Aorta (tissue), 5 donors: ENCODE measurements at regions of chrX and their contacts with region 1.

Region 1: GRCh38 chrX:49043220-49043986 is at the start of gene TFE3:
- DNase-seq: peak; percentile 98 to 99
- ATAC-seq: peak; percentile 93
- H3K4me3 ChIP-seq: peak within 1 kb of the TSS; percentile 32 to 77
- H3K27ac ChIP-seq: peak within 1 kb of the TSS; percentile 50 to 93
- H3K4me1 ChIP-seq: no peaks in the 10 kb centered on the region
- H3K27me3 ChIP-seq: no peaks in the 10 kb centered on the region
- total RNA-seq, gene TFE3: 67.7 to 70.6 TPM

Region 2: DNA sequence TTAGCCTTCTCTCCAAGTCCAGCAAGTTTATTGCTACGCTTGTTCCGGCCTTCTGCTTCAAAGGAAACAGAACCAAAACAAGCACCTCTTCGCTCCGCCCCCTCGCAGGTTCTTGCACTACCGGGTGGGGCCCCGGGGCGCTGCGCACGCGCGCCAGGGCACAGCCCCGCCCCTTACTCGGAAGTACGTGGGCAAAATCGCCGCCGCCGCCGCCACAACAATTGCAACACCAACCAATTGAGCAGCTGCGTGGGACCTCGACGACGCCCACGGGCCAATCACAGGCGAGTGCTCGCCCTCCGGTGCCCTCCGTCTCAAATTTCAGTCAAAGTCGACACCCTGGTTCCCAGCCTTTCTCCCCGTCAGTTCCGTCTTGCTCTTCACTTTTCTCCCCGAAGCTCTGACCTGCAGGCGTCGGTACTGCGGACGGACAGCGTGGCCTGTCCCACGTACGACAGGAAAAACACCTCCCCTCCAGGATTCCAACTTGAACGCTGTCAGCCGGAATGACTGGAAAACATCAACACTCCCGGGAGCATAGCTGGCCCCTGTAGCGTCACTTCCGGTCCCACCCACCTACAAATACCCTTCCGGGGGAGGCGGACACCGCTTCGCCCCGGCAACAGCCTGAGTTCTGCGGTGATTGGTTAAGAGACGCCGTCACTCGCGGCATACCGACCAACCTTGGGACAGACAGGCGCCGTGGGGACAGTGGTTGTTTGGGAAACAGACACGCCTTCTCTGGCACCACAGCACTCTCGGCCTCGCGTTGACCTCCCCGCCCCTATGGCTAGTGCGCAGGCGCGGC is 85.4 kb before region 1 on chrX:
- intact Hi-C with region 1: loop called in 1 of 2 experiments (anchors 5 kb)
- DNase-seq: peak; percentile 97 to 98
- ATAC-seq: peak; percentile 95
- H3K4me3 ChIP-seq: peak overlapping the region; percentile 61 to 67
- H3K27ac ChIP-seq: peak overlapping the region in 1 of 2 donors; percentile 97
- H3K4me1 ChIP-seq: peaks cover 0 to 2% of the 10 kb centered on the region in 2 donors
- H3K27me3 ChIP-seq: no peaks in the 10 kb centered on the region

Region 3: DNA sequence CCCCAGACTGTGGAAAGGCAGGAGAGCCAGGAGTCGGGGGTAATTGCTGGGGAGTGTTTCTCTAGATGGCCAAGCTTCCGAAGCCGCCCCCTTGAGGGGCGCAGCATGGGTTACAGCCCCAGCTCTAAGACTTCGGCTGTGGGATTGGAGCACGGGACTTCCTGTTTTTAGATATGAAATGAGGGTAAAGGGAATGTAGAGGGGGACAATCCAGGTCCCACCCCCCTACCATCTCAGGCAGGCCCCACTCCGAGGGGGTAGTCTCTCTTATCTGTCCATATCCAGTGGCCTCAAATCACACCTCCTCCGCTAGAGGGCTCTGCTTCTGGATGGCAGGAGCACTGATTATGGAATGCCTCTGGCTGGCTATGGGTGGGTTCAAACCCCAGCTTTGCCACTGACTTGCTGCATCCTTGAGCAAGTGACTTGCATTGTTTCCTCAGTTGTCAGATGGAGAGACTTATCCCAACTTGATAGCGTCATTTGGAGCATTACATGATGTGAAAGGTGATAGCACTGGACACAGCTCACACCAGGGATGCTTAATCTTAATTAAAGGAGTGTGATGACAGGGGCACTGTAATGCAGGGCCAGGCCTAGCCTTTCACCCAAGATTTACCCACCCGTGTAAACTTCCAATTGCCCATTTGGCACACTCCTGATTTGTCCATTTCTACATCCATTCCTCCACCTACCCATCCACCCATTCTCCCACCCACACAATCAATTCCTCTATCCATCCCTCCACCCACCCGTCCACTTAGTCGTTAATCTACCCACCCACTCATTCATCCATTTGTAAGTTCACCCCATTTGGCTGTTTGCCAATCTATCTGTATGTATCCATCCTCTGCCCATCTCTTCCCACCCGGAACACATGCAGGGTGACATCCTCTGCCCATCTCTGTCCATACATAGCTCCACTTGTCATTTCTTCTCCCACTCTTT is 70.9 kb before region 1 on chrX:
- intact Hi-C with region 1: loop called in 1 of 2 experiments (anchors 2 kb)
- DNase-seq: peak in 1 of 2 donors; percentile 61
- ATAC-seq: peak; percentile 51
- H3K4me3 ChIP-seq: no peak overlapping the region
- H3K27ac ChIP-seq: peak overlapping the region in 1 of 2 donors; percentile 38
- H3K4me1 ChIP-seq: no peaks in the 10 kb centered on the region
- H3K27me3 ChIP-seq: no peaks in the 10 kb centered on the region

Region 4: GRCh38 chrX:49002091-49002935 is 41.1 kb before region 1 on chrX and contains the start of gene GRIPAP1:
- intact Hi-C with region 1: loop called in 1 of 2 experiments (anchors 5 kb)
- DNase-seq: peak; percentile 75 to 84
- ATAC-seq: peak; percentile 91
- H3K4me3 ChIP-seq: peak within 1 kb of the TSS; percentile 38 to 71
- H3K27ac ChIP-seq: peak within 1 kb of the TSS in 1 of 2 donors; percentile 90
- H3K4me1 ChIP-seq: no peaks in the 10 kb centered on the region
- H3K27me3 ChIP-seq: no peaks in the 10 kb centered on the region
- total RNA-seq, gene GRIPAP1: 46.1 to 53.7 TPM